ENCODE measurements at regions of chr10 and their contacts with region 1.

Region 1: GRCh38 chr10:6202684-6203330 is at the start of gene PFKFB3:
- DNase-seq: peak; percentile 79 to 93 (median 86)
- ATAC-seq: peak; percentile 51 to 60
- H3K4me3 Mint-ChIP-seq: peak within 1 kb of the TSS; percentile 86 to 99 (median 96)
- H3K27ac Mint-ChIP-seq: peak within 1 kb of the TSS; percentile 82 to 97 (median 94)
- H3K4me1 Mint-ChIP-seq: peaks cover 11 to 32% (median 29%) of the 10 kb centered on the region in 4 donors
- H3K27me3 Mint-ChIP-seq: no peaks in the 10 kb centered on the region
- polyA plus RNA-seq, gene PFKFB3: 1.6 to 7.1 (median 4.8) TPM

Region 2: DNA sequence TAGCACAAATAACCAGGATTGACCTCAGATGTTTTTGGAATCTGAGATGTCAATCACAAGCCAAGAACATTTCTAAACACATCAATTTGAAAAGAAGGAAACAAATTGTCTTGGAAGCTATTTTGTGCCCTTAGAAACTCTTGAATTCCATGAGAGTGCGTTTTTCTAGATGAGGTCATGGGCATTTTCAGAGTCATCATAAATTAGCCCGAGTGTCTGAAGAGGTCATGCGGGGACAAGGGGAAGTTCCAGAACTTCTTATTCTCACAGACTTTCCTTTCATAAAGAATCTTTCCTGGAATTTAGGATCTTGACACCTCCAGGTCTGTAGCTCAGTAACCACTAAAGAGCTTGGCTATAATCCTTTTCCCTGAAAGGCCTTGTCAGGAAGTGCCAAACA is 168.9 kb before region 1 on chr10:
- POLR2A ChIA-PET with region 1: no interaction called
- DNase-seq: no peak
- ATAC-seq: no peak
- H3K4me3 Mint-ChIP-seq: no peak overlapping the region
- H3K27ac Mint-ChIP-seq: peak overlapping the region in 2 of 10 donors; percentile 8 to 29
- H3K4me1 Mint-ChIP-seq: peaks cover 17 to 31% (median 28%) of the 10 kb centered on the region in 4 donors
- H3K27me3 Mint-ChIP-seq: no peaks in the 10 kb centered on the region

Region 3: DNA sequence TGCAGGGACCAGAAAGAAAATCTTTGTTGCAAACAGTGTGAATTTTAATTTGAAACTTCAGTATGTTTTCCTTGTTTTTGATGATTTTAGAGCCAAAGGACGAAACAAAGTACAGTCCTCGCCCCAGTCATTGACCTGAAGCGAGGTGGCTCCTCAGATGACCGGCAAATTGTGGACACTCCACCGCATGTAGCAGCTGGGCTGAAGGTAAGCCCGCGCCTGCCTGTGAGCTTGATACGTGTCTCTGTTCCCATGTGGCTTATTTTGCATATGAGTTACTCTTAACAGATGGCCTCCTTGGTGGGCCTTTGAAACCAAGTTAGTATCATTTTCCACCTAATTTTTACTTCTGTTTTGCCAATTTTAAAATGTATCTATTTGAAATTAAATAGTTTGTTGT is 101.6 kb before region 1 on chr10:
- POLR2A ChIA-PET with region 1: no interaction called
- DNase-seq: no peak
- ATAC-seq: no peak
- H3K4me3 Mint-ChIP-seq: no peak overlapping the region
- H3K27ac Mint-ChIP-seq: peak overlapping the region in 1 of 10 donors; percentile 21
- H3K4me1 Mint-ChIP-seq: peaks cover 13 to 23% (median 23%) of the 10 kb centered on the region in 4 donors
- H3K27me3 Mint-ChIP-seq: no peaks in the 10 kb centered on the region

Region 4: DNA sequence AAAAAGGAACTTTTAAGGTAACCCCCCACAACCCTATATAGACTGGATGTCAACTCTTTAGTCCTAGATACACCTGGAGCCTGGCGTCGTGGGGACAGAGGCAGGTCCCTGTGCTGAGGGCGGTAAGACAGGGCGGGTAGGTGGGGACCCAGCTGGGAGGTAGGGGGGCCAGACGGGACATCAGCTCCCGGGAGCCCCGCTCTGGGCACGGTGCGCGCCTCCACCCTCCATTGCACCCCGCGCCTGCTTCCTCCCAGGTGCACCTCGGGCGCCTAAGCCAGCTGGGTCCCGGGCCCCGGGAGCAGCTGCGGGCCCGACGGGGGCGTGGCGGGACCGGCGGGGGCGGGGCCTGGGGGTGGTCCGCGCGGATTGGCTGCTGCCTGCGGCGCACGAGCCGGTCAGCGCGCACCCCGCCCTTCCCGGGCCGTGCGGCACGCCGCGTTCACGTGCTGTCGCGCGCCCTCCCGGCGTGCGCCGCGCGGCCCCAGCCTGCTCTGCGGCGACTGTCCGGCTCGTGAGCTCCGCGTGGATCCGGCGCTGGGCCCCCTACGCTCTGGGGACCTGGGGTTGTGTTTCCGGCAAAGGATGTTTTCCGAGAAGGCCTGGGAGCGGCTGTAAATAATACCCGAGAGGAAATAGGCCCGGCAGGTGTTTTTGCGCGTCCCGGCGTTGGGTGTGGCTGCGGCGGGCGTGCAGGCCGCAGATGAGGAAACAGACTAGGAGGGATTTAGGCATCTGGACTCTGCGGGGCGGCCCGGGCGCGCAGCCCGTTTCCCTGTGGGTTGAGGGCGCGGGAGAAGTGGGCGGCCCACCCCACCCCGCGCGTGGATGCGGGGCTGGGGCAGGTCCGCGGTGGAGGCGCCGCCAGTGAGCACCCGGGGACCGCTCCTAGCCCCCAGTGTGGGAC is 39.2 kb before region 1 on chr10:
- POLR2A ChIA-PET with region 1: interaction called, 65 read pairs
- DNase-seq: peak; percentile 85 to 94 (median 92)
- ATAC-seq: peak; percentile 85 to 93
- H3K4me3 Mint-ChIP-seq: peak overlapping the region; percentile 87 to 94 (median 92)
- H3K27ac Mint-ChIP-seq: peak overlapping the region; percentile 93 to 99 (median 97)
- H3K4me1 Mint-ChIP-seq: peaks cover 30 to 56% (median 50%) of the 10 kb centered on the region in 4 donors
- H3K27me3 Mint-ChIP-seq: no peaks in the 10 kb centered on the region

Region 5: GRCh38 chr10:6182454-6183098 is 20.2 kb before region 1 on chr10:
- POLR2A ChIA-PET with region 1: interaction called, 10 read pairs
- DNase-seq: no peak
- ATAC-seq: no peak
- H3K4me3 Mint-ChIP-seq: no peak overlapping the region
- H3K27ac Mint-ChIP-seq: peak overlapping the region in 1 of 10 donors; percentile 37
- H3K4me1 Mint-ChIP-seq: peaks cover 8 to 12% (median 8%) of the 10 kb centered on the region in 4 donors
- H3K27me3 Mint-ChIP-seq: no peaks in the 10 kb centered on the region

Region 6: GRCh38 chr10:6401562-6402348 is 198.9 kb after region 1 on chr10:
- POLR2A ChIA-PET with region 1: interaction called, 61 read pairs
- DNase-seq: peak; percentile 13 to 76 (median 60)
- ATAC-seq: peak; percentile 91 to 93
- H3K4me3 Mint-ChIP-seq: peak overlapping the region in 7 of 10 donors; percentile 10 to 43 (median 37)
- H3K27ac Mint-ChIP-seq: peak overlapping the region in 9 of 10 donors; percentile 33 to 88 (median 68)
- H3K4me1 Mint-ChIP-seq: peaks cover 7 to 41% (median 11%) of the 10 kb centered on the region in 4 donors
- H3K27me3 Mint-ChIP-seq: peaks cover 0 to 4% (median 0%) of the 10 kb centered on the region in 5 donors

Region 7: DNA sequence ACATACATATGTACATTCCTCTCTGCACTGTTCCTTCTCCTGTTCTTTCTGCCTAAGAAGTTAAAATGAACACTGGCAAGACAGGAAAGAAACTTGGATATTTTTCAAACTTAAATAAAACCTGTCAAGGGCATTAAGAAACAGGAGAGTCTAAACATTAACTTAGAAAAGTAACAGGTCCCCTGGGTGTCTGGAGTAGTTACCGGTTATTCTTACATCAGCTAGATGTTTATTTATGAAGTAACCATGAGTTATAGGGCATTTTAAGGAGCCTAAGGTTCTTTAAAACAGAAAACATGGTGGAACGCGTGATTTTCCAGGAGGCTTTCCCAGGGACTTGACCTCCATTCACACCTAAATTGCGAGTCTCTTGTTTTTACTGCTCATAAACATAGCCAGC is 229.1 kb after region 1 on chr10:
- POLR2A ChIA-PET with region 1: no interaction called
- DNase-seq: no peak
- ATAC-seq: no peak
- H3K4me3 Mint-ChIP-seq: no peak overlapping the region
- H3K27ac Mint-ChIP-seq: peak overlapping the region in 1 of 10 donors; percentile 57
- H3K4me1 Mint-ChIP-seq: peaks cover 0 to 12% (median 2%) of the 10 kb centered on the region in 4 donors
- H3K27me3 Mint-ChIP-seq: no peaks in the 10 kb centered on the region